Activated CD4-positive, alpha-beta memory T cell treated with anti-CD3 and anti-CD28 coated beads for 36 hours (primary cell): ENCODE measurements at regions of chr20 and their contacts with region 1.

Region 1: DNA sequence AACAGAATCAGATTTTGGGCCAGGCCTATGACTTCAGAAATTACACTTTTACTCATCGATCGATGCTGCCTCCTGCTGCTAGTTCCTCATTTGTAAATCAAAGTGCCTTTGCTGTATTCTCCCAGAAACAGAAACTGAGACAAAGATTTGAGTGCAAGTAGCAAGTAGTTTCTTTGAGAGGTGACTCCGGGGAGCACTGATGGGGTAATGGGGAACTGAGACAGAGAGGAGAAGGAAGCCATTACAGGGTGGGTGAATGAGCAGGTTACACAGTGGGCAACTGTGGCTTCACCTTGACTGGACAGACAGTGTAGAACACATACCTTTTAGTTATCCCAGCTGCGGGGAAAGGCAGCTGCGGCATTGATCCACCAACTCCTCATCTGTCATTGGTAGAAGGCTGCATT is 9.7 kb upstream of the CD40 start:
- DNase-seq: no peak
- H3K4me3 Mint-ChIP-seq: no peak overlapping the region
- H3K27ac Mint-ChIP-seq: no peak overlapping the region
- H3K4me1 Mint-ChIP-seq: peaks cover 5% of the 10 kb centered on the region
- H3K27me3 Mint-ChIP-seq: peaks cover 36% of the 10 kb centered on the region

Region 2: DNA sequence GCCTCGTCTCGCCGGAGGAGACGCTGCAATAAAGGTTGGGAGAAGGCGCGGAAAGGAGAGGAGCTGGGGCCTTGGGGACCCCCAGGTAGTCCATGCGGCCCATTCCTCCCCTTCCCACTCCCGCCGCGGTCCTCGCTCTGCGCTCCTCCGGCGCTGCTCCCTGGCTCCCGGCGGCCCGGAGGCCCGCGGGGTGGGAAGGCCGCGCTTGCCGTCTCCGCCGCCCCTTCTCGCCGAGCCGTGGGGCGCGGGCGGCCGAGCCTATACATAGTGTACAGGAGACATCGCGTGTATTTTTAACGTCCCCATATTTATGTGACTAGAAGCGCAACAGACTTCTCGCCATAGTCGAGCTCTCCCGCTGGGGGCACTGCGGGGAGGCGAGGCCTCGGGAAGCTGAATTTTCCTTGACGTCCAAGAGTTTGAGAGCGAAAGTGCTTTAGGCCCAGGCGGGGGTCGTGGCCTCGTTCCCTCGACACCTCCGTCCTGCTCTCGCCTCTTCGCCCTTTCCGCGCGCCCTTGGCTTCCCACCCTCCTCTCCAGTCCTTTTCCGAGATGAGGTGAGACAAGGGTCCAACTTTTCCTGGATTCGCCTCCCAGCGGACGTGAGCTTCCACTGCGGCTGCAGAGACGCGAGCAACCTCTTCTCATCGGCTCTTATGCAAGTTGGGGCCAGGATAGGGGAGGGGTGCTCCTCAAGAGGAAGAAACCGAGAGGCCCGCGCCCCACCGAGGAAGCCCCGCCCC is 50.4 kb before region 1 on chr20:
- CTCF ChIA-PET with region 1: no interaction called
- POLR2A ChIA-PET with region 1: no interaction called
- intact Hi-C with region 1: loop called (anchors 2 kb)
- DNase-seq: peak; percentile 28
- H3K4me3 Mint-ChIP-seq: no peak overlapping the region
- H3K27ac Mint-ChIP-seq: no peak overlapping the region
- H3K4me1 Mint-ChIP-seq: peaks cover 44% of the 10 kb centered on the region
- H3K27me3 Mint-ChIP-seq: peaks cover 11% of the 10 kb centered on the region